Kidney (tissue), 22 donors: ENCODE measurements at regions of chr3 and their contacts with region 1.

Region 1: DNA sequence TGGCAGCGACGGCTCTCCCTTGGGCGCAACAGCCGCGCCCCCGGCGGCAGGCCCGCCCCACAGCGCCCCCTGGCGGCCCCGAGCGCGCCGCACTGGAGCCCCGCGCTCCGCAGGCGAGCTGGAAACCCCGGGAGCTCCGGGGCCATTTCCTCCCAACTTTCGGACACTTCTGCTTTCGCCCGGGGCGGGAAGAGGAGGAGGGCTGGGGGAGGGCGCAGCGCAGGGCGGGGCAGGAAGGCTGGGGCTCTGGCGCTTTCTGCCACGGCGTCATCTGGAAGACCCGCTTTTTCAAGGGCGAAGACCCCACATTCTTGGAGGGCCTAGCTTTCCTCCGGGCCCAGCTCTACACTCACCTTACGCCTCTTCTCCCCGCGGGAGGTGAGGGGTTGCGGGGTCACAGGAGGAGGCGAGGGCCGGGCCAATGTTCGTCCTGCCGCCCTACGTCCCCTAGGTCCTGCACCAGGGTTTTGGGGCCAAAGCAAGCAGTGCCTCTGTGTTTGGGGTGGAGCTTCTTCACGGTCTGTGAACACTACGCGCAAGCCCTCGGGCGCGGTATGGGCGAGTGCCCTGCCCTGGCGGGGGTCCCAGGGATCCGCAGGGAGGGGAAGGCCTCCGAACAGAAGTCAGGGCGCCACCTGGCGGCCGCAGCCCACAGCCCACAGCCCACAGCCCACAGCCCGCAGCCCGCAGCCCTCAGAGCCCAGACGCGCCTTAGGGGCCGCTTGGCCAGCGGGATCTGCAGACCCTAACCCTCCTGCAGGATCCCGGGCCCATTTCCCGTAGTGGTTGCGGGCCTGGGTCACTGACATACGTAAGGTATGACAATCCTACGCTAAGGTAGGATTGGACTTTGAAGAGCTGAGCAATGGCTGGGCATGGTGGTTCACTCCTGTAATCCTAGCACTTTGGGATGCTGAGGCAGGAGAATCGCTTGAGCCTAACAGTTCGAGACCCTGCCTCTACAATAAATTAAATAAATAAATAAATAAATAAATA is 31.1 kb downstream of the FOXL2 start:
- DNase-seq: peak; percentile 94 to 98 (median 95)
- H3K4me3 ChIP-seq: peak overlapping the region; percentile 72 to 89 (median 86)
- H3K27ac ChIP-seq: peak overlapping the region; percentile 92
- H3K4me1 ChIP-seq: peaks cover 0 to 6% (median 4%) of the 10 kb centered on the region in 3 donors
- H3K27me3 ChIP-seq: no peaks in the 10 kb centered on the region
- CTCF ChIP-seq: peak; percentile 81

Region 2: DNA sequence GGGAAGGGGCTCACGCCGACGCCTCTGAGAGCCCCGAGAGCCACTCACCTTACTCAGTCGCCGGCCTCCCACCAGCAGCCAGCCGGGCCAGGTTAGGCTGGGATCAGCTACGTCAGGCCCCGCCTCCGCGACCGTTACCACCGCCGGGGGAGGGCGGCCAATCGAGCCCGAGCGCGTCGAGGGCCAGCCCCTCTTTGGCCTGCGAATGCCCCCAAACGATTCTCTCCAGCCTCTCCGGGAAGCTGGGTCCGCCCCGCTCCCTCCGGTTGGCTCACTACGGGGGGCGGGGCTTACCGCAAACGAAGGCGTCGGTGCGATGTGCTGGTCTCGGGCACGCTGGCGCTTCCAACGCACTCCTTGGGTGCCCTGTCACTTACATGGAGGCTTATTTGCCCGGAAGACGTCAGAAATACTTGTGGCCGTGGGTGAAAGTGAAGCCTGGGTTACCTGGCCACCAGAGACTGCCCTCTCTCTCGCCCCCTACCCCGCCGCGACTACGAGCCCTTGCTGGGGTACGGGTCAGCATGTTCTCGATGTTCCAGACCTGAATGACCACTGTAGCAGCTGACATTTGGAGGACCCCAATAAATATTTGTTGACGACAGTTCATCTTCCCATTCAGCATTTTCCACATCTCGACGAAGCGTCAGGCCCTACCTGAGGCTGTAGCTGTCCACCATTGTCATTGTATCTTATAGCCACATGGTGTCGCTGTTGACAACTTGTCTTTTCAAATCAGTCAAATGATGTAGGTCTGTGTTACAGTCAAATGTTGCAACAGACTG is 321.5 kb before region 1 on chr3 and contains the start of gene CEP70:
- intact Hi-C with region 1: loop called (anchors 5 kb)
- DNase-seq: peak; percentile 97 to 99 (median 98)
- H3K4me3 ChIP-seq: peak within 1 kb of the TSS; percentile 91 to 98 (median 92)
- H3K27ac ChIP-seq: peak within 1 kb of the TSS; percentile 95 to 97
- H3K4me1 ChIP-seq: peaks cover 0 to 5% (median 4%) of the 10 kb centered on the region in 3 donors
- H3K27me3 ChIP-seq: no peaks in the 10 kb centered on the region
- CTCF ChIP-seq: peak; percentile 96
- total RNA-seq, gene CEP70: 64.3 TPM

Region 3: DNA sequence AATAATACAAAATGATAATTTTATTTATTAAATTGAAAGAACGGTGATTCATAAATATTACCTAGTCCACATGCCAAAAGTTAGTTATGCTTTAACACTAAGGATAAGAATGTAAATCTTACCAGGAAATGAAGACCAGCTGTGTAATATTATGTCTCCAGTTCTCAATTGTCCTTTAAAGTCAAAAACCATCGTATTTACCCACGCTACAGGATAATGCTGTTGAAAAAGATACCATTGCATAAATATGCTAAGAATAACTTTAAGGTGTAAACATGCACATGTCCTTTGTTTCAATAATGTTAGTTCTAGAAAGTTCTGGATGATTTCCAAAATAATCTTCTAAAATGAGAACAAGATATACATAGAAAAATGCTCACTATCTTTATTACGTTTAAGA is 203.7 kb before region 1 on chr3:
- intact Hi-C with region 1: no loop called
- DNase-seq: no peak
- H3K4me3 ChIP-seq: no peak overlapping the region
- H3K27ac ChIP-seq: no peak overlapping the region
- H3K4me1 ChIP-seq: no peaks in the 10 kb centered on the region
- H3K27me3 ChIP-seq: no peaks in the 10 kb centered on the region
- CTCF ChIP-seq: no peak

Region 4: DNA sequence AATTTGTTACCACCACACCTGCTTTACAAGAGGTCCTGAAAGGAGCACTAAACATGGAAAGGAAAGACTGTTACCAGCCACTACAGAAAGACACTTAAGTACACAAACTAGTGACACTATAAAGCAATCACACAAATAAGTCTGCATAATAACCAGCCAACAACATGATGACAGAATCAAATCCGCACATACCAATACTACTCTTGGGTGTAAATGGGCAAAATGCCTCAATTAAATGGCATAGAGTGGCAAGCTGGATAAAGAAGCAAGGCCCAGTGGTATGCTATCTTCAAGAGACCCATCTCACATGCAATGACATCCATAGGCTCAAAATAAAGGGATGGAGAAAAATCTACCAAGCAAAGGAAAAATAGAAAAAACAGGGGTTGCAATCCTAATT is 235.7 kb after region 1 on chr3:
- intact Hi-C with region 1: no loop called
- DNase-seq: no peak
- H3K4me3 ChIP-seq: no peak overlapping the region
- H3K27ac ChIP-seq: no peak overlapping the region
- H3K4me1 ChIP-seq: no peaks in the 10 kb centered on the region
- H3K27me3 ChIP-seq: no peaks in the 10 kb centered on the region
- CTCF ChIP-seq: no peak